HAP-1 (cell line): ENCODE measurements at regions of chr3 and their contacts with region 1.

Region 1: GRCh38 chr3:47370887-47371697 is 9.7 kb upstream of the PTPN23 start:
- DNase-seq: peak in 1 of 2 experiments; percentile 39
- H3K4me3 ChIP-seq: no peak overlapping the region
- H3K4me1 ChIP-seq: no peaks in the 10 kb centered on the region
- H3K27me3 ChIP-seq: no peaks in the 10 kb centered on the region

Region 2: GRCh38 chr3:46449755-46450552 is 921.1 kb before region 1 on chr3:
- in situ Hi-C with region 1: loop called (anchors 25 kb)
- DNase-seq: peak in 1 of 2 experiments; percentile 59
- H3K4me3 ChIP-seq: no peak overlapping the region
- H3K4me1 ChIP-seq: no peaks in the 10 kb centered on the region
- H3K27me3 ChIP-seq: peaks cover 10% of the 10 kb centered on the region

Region 3: DNA sequence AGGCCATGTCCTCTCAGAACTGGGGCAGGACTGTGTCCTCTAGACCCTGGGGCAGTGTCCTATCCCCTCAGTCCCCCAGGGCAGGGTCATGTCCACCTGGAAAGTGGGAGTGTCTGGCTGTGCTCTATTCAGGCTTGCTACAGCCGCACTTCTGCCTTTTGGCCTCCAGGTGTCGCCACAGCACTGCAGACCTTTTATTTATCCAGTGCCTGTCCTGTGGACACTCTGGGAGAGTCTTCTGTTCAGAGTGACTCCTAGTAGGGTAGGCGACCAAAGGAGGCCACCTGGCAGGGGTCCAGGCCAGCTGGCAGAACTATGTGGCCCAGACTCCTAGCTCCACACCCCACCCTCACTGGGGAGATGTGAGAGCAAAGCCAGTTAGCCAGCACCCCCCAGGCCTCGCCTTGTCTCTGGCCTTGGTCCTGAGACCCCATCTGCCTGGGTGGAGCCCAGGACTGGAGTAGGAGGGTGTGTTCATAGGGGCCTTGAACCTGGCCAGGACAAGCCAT is 666.0 kb before region 1 on chr3:
- in situ Hi-C with region 1: loop called (anchors 25 kb)
- DNase-seq: peak; percentile 66 to 79
- H3K4me3 ChIP-seq: no peak overlapping the region
- H3K4me1 ChIP-seq: no peaks in the 10 kb centered on the region
- H3K27me3 ChIP-seq: no peaks in the 10 kb centered on the region

Region 4: GRCh38 chr3:46909535-46910442 is 461.3 kb before region 1 on chr3:
- in situ Hi-C with region 1: loop called (anchors 25 kb)
- DNase-seq: peak; percentile 74 to 92
- H3K4me3 ChIP-seq: no peak overlapping the region
- H3K4me1 ChIP-seq: no peaks in the 10 kb centered on the region
- H3K27me3 ChIP-seq: no peaks in the 10 kb centered on the region

Region 5: GRCh38 chr3:47553407-47553806 is 182.3 kb after region 1 on chr3:
- in situ Hi-C with region 1: no loop called
- DNase-seq: no peak
- H3K4me3 ChIP-seq: no peak overlapping the region
- H3K4me1 ChIP-seq: no peaks in the 10 kb centered on the region
- H3K27me3 ChIP-seq: no peaks in the 10 kb centered on the region